AG04449 (cell line): ENCODE measurements at regions of chr5 and their contacts with region 1.

Region 1: DNA sequence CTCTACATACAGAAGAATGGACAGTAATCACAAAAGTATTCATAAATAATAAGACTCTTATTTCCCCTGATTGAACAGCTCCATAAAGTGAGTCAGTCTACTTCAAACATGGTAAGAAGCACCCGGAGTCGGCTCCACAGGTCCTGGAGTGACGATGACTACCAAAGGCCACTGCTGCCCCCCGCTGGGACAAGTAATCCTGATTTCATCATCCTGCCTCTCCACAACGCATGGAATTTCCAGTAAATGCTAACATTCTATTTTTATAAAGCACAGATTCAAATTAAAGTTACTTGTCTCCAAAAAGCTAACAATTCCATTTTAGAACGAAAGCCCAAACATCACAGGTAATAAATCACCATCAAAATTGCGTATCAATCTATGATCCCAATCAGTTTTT is 16.2 kb downstream of the ATPSCKMT start:
- DNase-seq: peak; percentile 96
- H3K4me3 ChIP-seq: no peak overlapping the region
- CTCF ChIP-seq: peak; percentile 39

Region 2: GRCh38 chr5:10140195-10140973 is 93.1 kb before region 1 on chr5:
- CTCF ChIA-PET with region 1: interaction called, 12 read pairs
- POLR2A ChIA-PET with region 1: no interaction called
- DNase-seq: no peak
- H3K4me3 ChIP-seq: no peak overlapping the region
- CTCF ChIP-seq: peak; percentile 29

Region 3: DNA sequence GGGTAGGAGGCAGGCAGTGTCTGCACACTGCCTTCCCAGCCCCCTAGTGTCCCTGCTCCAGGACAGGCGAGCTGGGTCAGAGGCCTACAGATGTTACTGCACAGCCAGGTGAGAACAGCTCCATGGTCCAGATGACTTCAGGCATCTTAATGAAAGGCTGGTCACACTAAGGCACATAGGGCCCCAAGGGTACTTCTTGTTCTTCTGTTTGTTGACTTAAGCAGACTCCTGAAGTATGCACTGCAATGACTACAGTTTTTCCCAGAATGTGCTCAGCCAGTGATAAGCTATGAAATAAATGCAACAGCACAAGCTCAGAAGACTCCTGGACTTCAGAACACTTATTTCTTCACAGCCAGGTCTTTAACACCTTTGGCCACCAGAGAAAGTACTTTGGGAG is 11.2 kb before region 1 on chr5:
- CTCF ChIA-PET with region 1: interaction called, 15 read pairs
- POLR2A ChIA-PET with region 1: interaction called, 5 read pairs
- DNase-seq: no peak
- H3K4me3 ChIP-seq: no peak overlapping the region
- CTCF ChIP-seq: no peak

Region 4: DNA sequence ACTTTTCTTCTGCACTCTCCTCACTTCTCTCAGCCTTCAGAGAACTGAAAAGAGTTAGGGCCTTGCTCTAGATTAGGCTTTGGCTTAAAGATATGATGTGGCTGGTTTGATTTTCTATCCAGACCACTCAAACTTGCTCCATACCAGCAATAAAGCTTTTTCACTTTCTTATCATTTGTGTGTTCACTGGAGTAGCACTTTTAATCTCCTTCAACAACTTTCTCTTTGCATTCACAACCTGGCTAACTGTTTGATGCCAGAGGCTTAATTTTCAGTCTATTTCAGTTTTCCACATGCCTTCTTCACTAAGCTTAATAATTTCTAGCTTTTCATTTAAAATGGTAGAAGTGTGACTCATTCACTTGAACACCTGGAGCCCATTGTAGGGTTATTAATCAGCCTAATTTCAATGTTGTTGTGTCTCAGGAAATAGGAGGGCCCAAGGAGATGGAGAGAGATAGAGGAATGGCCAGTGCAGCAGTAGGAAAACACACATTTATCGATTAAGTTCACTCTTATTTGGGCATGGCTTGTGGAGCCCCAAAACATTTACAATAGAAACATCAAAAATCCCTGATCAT is 10.2 kb after region 1 on chr5:
- CTCF ChIA-PET with region 1: interaction called, 11 read pairs
- POLR2A ChIA-PET with region 1: no interaction called
- DNase-seq: no peak
- H3K4me3 ChIP-seq: no peak overlapping the region
- CTCF ChIP-seq: no peak

Region 5: GRCh38 chr5:10265245-10266109 is 32.0 kb after region 1 on chr5:
- CTCF ChIA-PET with region 1: no interaction called
- POLR2A ChIA-PET with region 1: no interaction called
- DNase-seq: no peak
- H3K4me3 ChIP-seq: no peak overlapping the region
- CTCF ChIP-seq: no peak